ENCODE measurements at regions of chr20 and their contacts with region 1.

Region 1: GRCh38 chr20:22333885-22334545 is 250.4 kb downstream of the FOXA2 start:
- DNase-seq: no peak
- ATAC-seq: peak; percentile 92
- H3K4me3 ChIP-seq: no peak overlapping the region
- H3K27ac ChIP-seq: no peak overlapping the region
- H3K4me1 ChIP-seq: no peaks in the 10 kb centered on the region
- H3K27me3 ChIP-seq: no peaks in the 10 kb centered on the region
- CTCF ChIP-seq: peak; percentile 73 to 80 (median 73)
- EP300 ChIP-seq: no peak
- POLR2A ChIP-seq: no peak
- RAD21 ChIP-seq: peak; percentile 49

Region 2: GRCh38 chr20:22063753-22064152 is 270.3 kb before region 1 on chr20:
- CTCF ChIA-PET with region 1: no interaction called
- POLR2A ChIA-PET with region 1: no interaction called
- RAD21 ChIA-PET with region 1: no interaction called
- SMC1A ChIA-PET with region 1: no interaction called
- in situ Hi-C with region 1: no loop called
- intact Hi-C with region 1: no loop called
- DNase-seq: no peak
- ATAC-seq: no peak
- H3K4me3 ChIP-seq: no peak overlapping the region
- H3K27ac ChIP-seq: no peak overlapping the region
- H3K4me1 ChIP-seq: no peaks in the 10 kb centered on the region
- H3K27me3 ChIP-seq: no peaks in the 10 kb centered on the region
- CTCF ChIP-seq: no peak
- EP300 ChIP-seq: no peak
- POLR2A ChIP-seq: no peak
- RAD21 ChIP-seq: no peak

Region 3: DNA sequence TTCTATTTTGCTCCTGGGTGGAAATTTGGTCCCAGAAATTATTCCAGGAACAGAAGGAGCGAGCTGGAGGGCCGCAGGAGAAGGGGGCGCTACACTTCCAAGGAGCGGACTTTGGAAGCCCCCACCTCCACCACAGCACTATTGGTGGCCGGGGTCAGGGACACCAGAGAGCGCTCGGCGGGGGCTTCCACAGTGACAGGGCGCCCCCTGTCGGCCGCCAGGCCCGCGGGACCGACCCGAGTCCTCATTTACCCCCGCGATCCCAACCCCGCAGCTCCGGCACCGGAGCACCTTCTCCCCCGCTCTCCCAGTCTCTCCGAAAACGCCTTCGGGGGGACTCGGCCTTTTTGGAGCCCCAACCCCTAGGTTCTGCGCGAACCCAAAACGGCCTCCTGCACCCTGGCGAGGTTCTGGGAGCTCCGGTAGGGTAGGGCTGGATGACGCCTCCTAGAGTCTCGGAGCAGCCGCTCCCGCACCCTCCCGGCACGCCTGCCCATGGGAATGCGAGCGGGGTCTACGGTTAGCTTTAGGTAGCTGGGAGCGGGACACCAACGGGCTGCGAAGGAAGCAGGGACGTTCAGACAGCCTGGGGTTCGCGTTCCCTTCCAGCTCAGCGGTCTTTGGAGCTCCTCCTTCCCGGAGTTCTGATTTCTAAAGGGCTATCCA is 252.8 kb after region 1 on chr20:
- CTCF ChIA-PET with region 1: interaction called, 47 read pairs
- POLR2A ChIA-PET with region 1: no interaction called
- RAD21 ChIA-PET with region 1: interaction called, 32 read pairs
- SMC1A ChIA-PET with region 1: interaction called, 23 read pairs
- in situ Hi-C with region 1: loop called (anchors 5 kb)
- intact Hi-C with region 1: loop called (anchors 1 kb)
- DNase-seq: no peak
- ATAC-seq: peak; percentile 72
- H3K4me3 ChIP-seq: no peak overlapping the region
- H3K27ac ChIP-seq: no peak overlapping the region
- H3K4me1 ChIP-seq: no peaks in the 10 kb centered on the region
- H3K27me3 ChIP-seq: peaks cover 0 to 6% of the 10 kb centered on the region in 2 experiments; a peak in 3 of 4 replicates
- CTCF ChIP-seq: peak; percentile 50 to 54 (median 51)
- EP300 ChIP-seq: no peak
- POLR2A ChIP-seq: no peak
- RAD21 ChIP-seq: peak; percentile 59

Region 4: DNA sequence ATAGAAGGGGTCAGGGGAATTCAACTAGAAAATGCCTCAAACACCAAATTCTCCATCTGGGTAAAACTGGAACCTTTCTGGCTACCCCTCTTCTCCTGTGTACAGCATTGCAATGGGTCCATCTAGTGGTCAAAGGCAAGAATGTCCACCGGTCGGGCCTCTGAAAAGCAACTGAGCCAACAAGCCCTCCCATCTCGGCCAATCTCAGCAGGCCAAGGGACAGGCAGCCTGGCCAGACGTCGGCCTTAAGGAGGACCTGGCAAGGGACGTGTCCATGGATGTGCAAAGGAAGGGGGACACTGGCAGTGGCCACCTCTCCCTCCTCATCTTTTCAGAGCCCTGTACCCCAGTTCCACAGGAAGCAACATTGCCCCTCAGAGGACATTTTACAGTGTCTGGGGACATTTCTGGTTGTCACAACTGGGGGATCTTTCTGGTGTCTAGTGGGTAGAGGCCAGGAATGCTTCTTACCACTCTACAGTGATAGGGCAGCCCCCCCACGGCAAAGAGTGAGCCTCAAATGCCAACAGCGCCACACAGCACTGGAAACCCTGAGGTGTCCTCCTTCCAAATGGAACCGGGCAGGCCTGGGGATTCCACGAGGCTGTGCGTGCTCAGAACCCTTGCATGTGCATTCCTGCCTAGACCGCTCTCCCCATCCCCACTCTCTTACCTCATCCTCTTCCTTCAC is 350.2 kb after region 1 on chr20:
- CTCF ChIA-PET with region 1: interaction called, 80 read pairs
- POLR2A ChIA-PET with region 1: no interaction called
- RAD21 ChIA-PET with region 1: interaction called, 31 read pairs
- SMC1A ChIA-PET with region 1: interaction called, 37 read pairs
- in situ Hi-C with region 1: loop called (anchors 5 kb)
- intact Hi-C with region 1: loop called (anchors 1 kb)
- DNase-seq: peak; percentile 15
- ATAC-seq: peak; percentile 96
- H3K4me3 ChIP-seq: no peak overlapping the region
- H3K27ac ChIP-seq: no peak overlapping the region
- H3K4me1 ChIP-seq: no peaks in the 10 kb centered on the region
- H3K27me3 ChIP-seq: no peaks in the 10 kb centered on the region
- CTCF ChIP-seq: peak; percentile 77 to 88 (median 78)
- EP300 ChIP-seq: no peak
- POLR2A ChIP-seq: no peak
- RAD21 ChIP-seq: peak; percentile 93

Region 5: DNA sequence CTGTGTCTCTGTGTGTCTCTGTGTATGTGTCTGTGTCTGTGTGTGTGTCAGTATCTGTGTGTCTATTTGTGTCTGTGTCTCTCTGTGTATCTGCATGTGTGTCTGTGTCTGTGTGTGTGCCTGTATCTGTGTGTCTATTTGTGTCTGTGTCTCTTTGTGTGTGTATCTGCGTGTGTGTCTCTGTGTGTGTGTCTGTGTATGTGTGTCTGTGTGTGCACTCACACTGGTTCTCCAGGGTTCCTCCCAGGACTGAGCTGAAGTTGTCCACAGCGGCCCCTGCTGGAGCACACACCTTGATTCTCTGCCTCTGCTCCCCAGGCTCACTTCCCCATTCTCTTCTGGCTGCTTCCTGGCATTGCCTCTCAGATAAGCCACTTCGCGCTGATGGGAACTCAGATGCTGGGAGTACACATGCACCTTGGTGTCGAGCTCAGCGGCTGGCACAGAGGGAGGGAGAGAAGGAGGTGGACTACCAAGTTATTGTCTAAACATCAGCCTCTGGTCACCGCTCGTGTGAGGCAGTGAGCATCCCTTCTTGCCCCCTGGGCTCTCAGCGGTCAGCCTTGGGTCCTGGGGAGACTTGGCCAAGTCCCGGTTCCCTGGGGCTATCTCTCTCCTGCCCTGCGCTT is 911.7 kb after region 1 on chr20:
- CTCF ChIA-PET with region 1: no interaction called
- POLR2A ChIA-PET with region 1: no interaction called
- RAD21 ChIA-PET with region 1: no interaction called
- SMC1A ChIA-PET with region 1: no interaction called
- in situ Hi-C with region 1: loop called (anchors 25 kb)
- intact Hi-C with region 1: no loop called
- DNase-seq: peak; percentile 48
- ATAC-seq: peak; percentile 97
- H3K4me3 ChIP-seq: no peak overlapping the region
- H3K27ac ChIP-seq: no peak overlapping the region
- H3K4me1 ChIP-seq: peaks cover 24% of the 10 kb centered on the region
- H3K27me3 ChIP-seq: no peaks in the 10 kb centered on the region
- CTCF ChIP-seq: peak; percentile 71 to 77 (median 75)
- EP300 ChIP-seq: no peak
- POLR2A ChIP-seq: no peak
- RAD21 ChIP-seq: peak; percentile 56

Measured in GM12878 (cell line).